ENCODE measurements at regions of chr9 and their contacts with region 1.

Region 1: DNA sequence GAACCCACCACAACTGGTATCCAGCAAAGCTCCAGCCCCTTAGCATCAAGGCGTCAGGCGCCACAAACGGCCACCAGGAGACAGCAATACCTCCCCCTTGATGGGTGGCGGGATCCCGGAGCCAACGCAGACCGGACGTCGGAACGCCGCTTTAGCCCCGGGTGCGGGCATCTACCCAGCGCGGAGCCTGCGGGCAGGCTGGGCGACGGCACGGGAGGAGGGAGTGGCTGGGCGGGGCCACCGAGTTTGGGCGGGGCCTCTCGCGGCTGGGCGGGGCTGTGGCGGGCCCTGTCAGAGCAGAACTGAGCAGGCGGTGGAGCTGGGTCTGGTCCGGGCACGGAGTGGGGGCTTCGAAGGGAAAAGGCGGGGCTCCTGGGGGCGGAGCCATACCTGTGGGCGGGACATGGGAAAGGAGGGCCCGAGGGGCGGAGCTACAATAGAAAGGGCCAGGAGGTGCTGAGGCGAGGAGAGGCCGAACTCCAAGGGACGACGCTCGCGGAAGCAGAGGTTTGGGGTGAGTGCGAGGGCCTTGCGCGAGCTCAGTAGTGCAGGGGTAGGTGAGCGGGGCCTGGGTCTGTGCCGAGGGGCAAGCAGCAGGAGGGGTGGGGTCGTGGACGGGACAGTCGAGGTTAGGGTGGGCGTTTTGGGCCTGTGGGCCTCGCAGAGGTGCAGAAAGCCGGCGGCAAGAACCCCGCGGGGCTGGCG is 40.2 kb upstream of the GARNL3 start:
- DNase-seq: peak; percentile 69 to 96
- H3K4me3 ChIP-seq: peak overlapping the region; percentile 59 to 99
- H3K27ac ChIP-seq: peak overlapping the region; percentile 90 to 91
- H3K4me1 ChIP-seq: peaks cover 2 to 7% of the 10 kb centered on the region in 2 donors
- H3K27me3 ChIP-seq: no peaks in the 10 kb centered on the region
- CTCF ChIP-seq: peak; percentile 23 to 49 (median 31)

Region 2: DNA sequence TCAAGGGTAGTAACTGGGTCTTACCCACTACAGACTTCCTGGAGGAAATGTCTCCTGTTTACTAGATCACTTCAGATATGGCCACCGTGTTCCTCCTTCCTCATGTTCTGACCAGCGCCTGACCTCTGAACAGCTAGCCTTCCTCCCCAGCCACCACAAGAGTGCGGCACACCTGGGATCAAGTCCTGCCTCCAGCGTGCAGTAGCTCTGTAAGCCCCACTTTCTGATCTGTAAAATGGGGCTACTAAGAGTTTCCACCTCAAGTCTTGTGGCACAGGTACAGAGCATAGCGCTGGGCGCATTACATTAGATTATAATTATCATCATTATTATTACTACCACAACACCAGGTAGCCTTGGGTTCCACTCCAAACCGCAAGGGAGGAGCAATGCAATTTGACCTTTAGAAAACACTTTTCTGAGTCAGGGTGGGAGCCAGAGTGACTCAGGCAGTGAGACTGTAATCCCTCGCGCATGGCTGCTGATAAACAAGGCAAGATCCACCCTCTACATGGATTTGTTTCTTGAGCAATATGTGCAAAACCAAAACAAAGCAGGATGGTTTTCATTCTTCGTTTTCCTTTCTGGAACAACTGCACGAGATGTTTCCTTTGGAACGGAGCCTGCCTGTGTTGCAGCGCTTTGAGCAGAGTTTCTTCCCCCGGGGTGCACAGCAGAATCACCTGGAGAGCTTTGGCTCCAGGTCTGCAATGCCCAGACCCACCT is 36.9 kb before region 1 on chr9:
- intact Hi-C with region 1: loop called (anchors 2 kb)
- DNase-seq: peak in 1 of 2 donors; percentile 92
- H3K4me3 ChIP-seq: no peak overlapping the region
- H3K27ac ChIP-seq: peak overlapping the region; percentile 90 to 91
- H3K4me1 ChIP-seq: peaks cover 14 to 41% of the 10 kb centered on the region in 2 donors
- H3K27me3 ChIP-seq: no peaks in the 10 kb centered on the region
- CTCF ChIP-seq: peak in 1 of 3 experiments; percentile 9

Region 3: GRCh38 chr9:127258606-127259471 is 34.5 kb after region 1 on chr9:
- intact Hi-C with region 1: loop called (anchors 2 kb)
- DNase-seq: peak in 1 of 2 donors; percentile 75
- H3K4me3 ChIP-seq: no peak overlapping the region
- H3K27ac ChIP-seq: peak overlapping the region; percentile 87 to 91
- H3K4me1 ChIP-seq: peaks cover 10 to 36% of the 10 kb centered on the region in 2 donors
- H3K27me3 ChIP-seq: no peaks in the 10 kb centered on the region
- CTCF ChIP-seq: no peak

Region 4: GRCh38 chr9:127336738-127337251 is 112.5 kb after region 1 on chr9:
- intact Hi-C with region 1: loop called (anchors 5 kb)
- DNase-seq: peak; percentile 54 to 96
- H3K4me3 ChIP-seq: peak overlapping the region in 1 of 2 donors; percentile 20
- H3K27ac ChIP-seq: peak overlapping the region; percentile 75 to 79
- H3K4me1 ChIP-seq: peaks cover 6 to 27% of the 10 kb centered on the region in 2 donors
- H3K27me3 ChIP-seq: no peaks in the 10 kb centered on the region
- CTCF ChIP-seq: no peak

Region 5: DNA sequence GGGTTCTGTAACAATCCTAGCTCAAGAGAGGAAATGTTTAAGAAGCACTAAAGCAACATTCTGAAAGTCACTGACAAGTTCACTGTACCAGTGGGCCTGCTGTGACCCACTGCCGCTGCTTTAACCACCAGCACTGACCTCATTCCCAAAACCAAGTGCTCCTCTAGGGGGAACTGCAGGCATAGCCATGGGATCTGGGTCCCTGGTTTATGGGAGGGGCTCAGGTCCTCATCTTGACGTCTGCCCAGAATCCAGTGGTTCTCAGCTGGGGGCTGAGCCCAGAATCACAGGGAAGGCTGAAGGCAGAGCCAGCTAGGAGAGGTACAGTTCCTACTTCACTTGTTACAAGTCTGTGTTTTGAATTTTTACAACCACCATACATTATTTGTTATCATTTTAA is 136.5 kb after region 1 on chr9:
- intact Hi-C with region 1: loop called (anchors 2 kb)
- DNase-seq: no peak
- H3K4me3 ChIP-seq: no peak overlapping the region
- H3K27ac ChIP-seq: peak overlapping the region; percentile 80 to 84
- H3K4me1 ChIP-seq: peaks cover 5 to 26% of the 10 kb centered on the region in 2 donors
- H3K27me3 ChIP-seq: no peaks in the 10 kb centered on the region
- CTCF ChIP-seq: peak in 1 of 3 experiments; percentile 12

Region 6: DNA sequence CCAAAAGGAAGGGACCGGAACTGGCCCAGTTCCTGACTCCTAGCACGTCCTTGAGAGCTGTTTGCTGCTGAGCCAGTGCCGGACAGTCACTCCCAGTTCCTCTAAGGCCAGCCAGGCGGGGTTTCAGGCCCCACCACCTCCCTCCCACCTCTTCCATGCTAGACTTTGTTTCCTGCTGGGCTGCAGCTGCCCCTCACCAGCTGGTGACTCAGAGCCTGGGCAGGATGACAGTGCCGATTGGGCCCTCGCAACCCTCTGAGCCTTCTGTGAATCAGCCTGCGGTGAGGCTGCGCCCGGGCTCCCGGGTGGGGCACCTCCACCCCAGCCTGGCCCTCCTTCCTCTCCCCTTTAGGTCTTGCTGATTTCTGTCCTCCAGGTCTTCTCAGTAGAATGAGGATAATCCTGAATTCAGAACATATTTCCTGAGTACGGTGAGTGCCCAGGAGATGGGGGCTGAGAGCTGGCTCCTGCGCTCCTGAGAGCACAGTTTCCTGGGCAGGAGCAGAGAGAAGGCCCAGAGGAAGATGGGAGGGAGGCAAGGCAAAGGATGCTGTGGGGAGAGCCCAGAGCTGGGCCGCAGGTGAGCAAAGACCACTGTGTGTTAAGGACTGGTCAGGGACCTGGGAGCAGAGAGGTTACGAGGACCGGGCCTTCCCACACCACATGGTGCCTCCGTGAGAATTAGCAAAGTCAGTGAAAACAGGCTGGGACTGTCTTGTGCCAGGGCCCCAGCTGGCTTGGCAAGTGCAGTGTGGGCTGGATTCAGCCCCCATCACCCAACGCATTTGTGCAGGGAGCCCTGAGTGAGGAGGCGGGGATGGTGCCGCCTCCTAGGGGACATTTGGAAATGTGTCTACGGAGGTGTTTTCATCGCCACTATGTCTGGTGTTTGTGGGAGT is 354.9 kb after region 1 on chr9:
- intact Hi-C with region 1: loop called (anchors 10 kb)
- DNase-seq: peak; percentile 92 to 98
- H3K4me3 ChIP-seq: peak overlapping the region; percentile 33 to 57
- H3K27ac ChIP-seq: peak overlapping the region; percentile 97
- H3K4me1 ChIP-seq: peaks cover 10 to 32% of the 10 kb centered on the region in 2 donors
- H3K27me3 ChIP-seq: no peaks in the 10 kb centered on the region
- CTCF ChIP-seq: peak; percentile 46 to 60 (median 48)

Measured in ascending aorta (tissue), 2 donors.